CD8-positive, alpha-beta memory T cell (primary cell): ENCODE measurements at regions of chr2 and their contacts with region 1.

Region 1: GRCh38 chr2:219278655-219279516 is at the start of gene DNAJB2:
- DNase-seq: peak; percentile 99 to 100 (median 99)
- H3K4me3 ChIP-seq: peak within 1 kb of the TSS; percentile 72
- H3K4me3 Mint-ChIP-seq: peak within 1 kb of the TSS; percentile 89 to 98 (median 93)
- H3K27ac ChIP-seq: peak within 1 kb of the TSS; percentile 99
- H3K27ac Mint-ChIP-seq: peak within 1 kb of the TSS; percentile 97 to 100 (median 100)
- H3K4me1 ChIP-seq: peaks cover 32% of the 10 kb centered on the region
- H3K4me1 Mint-ChIP-seq: peaks cover 31 to 54% (median 41%) of the 10 kb centered on the region in 3 donors
- H3K27me3 ChIP-seq: no peaks in the 10 kb centered on the region
- H3K27me3 Mint-ChIP-seq: no peaks in the 10 kb centered on the region
- total RNA-seq, gene DNAJB2: 48.5 to 56.4 TPM

Region 2: GRCh38 chr2:219206442-219207253 is 72.2 kb before region 1 on chr2 and contains the start of gene ZFAND2B:
- CTCF ChIA-PET with region 1: interaction called, 10 read pairs
- POLR2A ChIA-PET with region 1: interaction called, 20 read pairs
- DNase-seq: peak; percentile 95 to 98 (median 96)
- H3K4me3 ChIP-seq: peak within 1 kb of the TSS; percentile 81
- H3K4me3 Mint-ChIP-seq: peak within 1 kb of the TSS; percentile 88 to 97 (median 94)
- H3K27ac ChIP-seq: peak within 1 kb of the TSS; percentile 85
- H3K27ac Mint-ChIP-seq: peak within 1 kb of the TSS; percentile 95 to 99 (median 96)
- H3K4me1 ChIP-seq: peaks cover 29% of the 10 kb centered on the region
- H3K4me1 Mint-ChIP-seq: peaks cover 32 to 53% (median 49%) of the 10 kb centered on the region in 3 donors
- H3K27me3 ChIP-seq: no peaks in the 10 kb centered on the region
- H3K27me3 Mint-ChIP-seq: no peaks in the 10 kb centered on the region
- total RNA-seq, gene ZFAND2B: 32.4 to 36.8 TPM

Region 3: DNA sequence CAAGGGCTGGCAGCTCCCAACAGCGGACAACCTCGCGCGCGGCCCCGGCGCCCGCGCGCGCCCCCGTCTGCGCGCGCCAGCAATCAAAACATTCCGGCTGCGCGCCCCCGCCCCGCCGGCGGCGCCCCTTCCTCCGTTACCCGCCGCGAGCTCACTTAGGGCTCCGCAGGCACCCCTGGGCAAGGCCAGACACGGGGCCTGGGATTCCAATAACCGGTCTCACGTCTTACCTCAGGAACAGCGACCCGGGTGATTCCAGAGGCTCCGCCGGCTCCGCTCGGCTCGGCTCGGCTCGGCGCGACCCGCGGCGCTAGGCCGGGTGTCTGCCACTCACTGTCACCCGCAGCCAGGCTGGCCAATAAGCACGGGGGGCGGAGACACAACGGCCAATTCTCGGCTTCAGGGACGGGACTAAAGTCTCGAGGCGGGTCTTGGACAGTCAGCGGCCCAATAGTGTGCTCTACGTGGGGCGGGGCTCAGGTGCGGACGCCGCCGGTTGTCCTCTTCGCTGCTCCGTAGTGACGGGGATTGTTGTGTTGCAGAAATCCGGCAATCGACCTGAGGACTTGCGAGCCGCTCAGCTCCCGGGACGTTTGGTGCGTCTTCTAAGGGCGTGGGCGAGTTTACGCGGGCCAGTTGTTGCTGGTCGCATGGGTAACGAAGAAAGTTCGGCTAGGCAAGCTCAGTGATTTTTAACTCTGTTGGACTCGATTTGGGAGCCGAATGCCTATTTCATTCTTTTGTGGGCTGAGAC is 49.4 kb before region 1 on chr2 and contains the starts of genes ANKZF1 and ATG9A:
- CTCF ChIA-PET with region 1: interaction called, 12 read pairs
- POLR2A ChIA-PET with region 1: interaction called, 15 read pairs
- DNase-seq: peak; percentile 96 to 99 (median 98)
- H3K4me3 ChIP-seq: peak within 1 kb of the TSS; percentile 93
- H3K4me3 Mint-ChIP-seq: peak within 1 kb of the TSS; percentile 92 to 100 (median 98)
- H3K27ac ChIP-seq: peak within 1 kb of the TSS; percentile 96
- H3K27ac Mint-ChIP-seq: peak within 1 kb of the TSS; percentile 94 to 100 (median 98)
- H3K4me1 ChIP-seq: peaks cover 44% of the 10 kb centered on the region
- H3K4me1 Mint-ChIP-seq: peaks cover 42 to 79% (median 54%) of the 10 kb centered on the region in 3 donors
- H3K27me3 ChIP-seq: no peaks in the 10 kb centered on the region
- H3K27me3 Mint-ChIP-seq: no peaks in the 10 kb centered on the region
- total RNA-seq, gene ANKZF1: 72.4 to 76.0 TPM
- total RNA-seq, gene ATG9A: 46.1 to 52.9 TPM

Region 4: DNA sequence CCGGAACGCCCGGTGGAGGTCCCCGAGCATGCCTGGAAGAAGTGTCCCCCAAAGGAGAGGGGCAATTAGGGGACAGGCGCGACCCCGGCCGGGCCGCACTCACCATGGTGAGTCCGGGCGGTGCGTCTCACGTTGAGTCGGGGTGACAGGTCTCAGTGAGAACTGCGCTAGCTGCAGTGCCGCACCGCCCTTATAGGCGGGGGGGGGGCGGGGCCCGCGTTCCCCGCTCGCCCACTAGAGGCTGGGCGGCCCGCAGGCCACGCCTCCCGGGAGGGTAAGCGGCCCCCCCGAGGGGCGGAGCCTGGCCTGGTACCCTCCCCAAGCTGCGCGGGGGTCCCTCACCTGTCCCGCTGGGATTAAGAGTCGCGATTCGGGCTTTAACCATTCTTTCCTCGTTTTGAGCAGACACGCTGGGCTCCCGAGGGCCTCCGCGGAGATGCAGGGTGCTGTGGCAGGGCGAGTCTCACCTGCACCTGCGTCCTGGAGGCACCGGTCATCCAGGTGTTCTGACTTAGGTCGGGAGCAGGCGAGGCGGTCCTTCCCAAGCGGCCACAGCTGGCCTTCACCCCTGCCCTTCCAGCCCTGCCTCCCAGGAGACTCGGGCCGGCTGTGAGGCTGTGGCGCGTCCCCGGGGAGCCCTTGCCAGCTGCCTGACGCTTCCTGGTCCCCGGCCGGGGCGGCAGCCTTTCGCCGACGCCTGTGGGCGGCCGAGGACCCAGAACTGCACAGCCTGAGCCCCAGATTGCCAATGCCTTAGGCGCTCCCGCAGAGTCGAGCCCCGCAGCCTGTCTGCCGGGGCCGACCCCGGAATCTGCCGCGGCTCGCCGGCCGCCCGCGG is 24.9 kb before region 1 on chr2 and contains the start of gene TUBA4A:
- CTCF ChIA-PET with region 1: interaction called, 136 read pairs
- POLR2A ChIA-PET with region 1: interaction called, 57 read pairs
- DNase-seq: peak; percentile 88 to 95 (median 90)
- H3K4me3 ChIP-seq: peak within 1 kb of the TSS; percentile 99
- H3K4me3 Mint-ChIP-seq: peak within 1 kb of the TSS; percentile 84 to 99 (median 89)
- H3K27ac ChIP-seq: peak within 1 kb of the TSS; percentile 95
- H3K27ac Mint-ChIP-seq: peak within 1 kb of the TSS; percentile 91 to 100 (median 96)
- H3K4me1 ChIP-seq: peaks cover 37% of the 10 kb centered on the region
- H3K4me1 Mint-ChIP-seq: peaks cover 45 to 50% (median 45%) of the 10 kb centered on the region in 3 donors
- H3K27me3 ChIP-seq: no peaks in the 10 kb centered on the region
- H3K27me3 Mint-ChIP-seq: no peaks in the 10 kb centered on the region
- total RNA-seq, gene TUBA4A: 175 to 178 TPM

Region 5: GRCh38 chr2:219388127-219388844 is 109.4 kb after region 1 on chr2:
- CTCF ChIA-PET with region 1: interaction called, 4 read pairs
- POLR2A ChIA-PET with region 1: interaction called, 15 read pairs
- DNase-seq: peak; percentile 99 to 100 (median 99)
- H3K4me3 ChIP-seq: peak overlapping the region; percentile 61
- H3K4me3 Mint-ChIP-seq: peak overlapping the region; percentile 80 to 99 (median 96)
- H3K27ac ChIP-seq: peak overlapping the region; percentile 34
- H3K27ac Mint-ChIP-seq: peak overlapping the region; percentile 82 to 96 (median 92)
- H3K4me1 ChIP-seq: peaks cover 21% of the 10 kb centered on the region
- H3K4me1 Mint-ChIP-seq: peaks cover 20 to 36% (median 23%) of the 10 kb centered on the region in 3 donors
- H3K27me3 ChIP-seq: no peaks in the 10 kb centered on the region
- H3K27me3 Mint-ChIP-seq: no peaks in the 10 kb centered on the region